ENCODE measurements at regions of chr1 and their contacts with region 1.

Region 1: DNA sequence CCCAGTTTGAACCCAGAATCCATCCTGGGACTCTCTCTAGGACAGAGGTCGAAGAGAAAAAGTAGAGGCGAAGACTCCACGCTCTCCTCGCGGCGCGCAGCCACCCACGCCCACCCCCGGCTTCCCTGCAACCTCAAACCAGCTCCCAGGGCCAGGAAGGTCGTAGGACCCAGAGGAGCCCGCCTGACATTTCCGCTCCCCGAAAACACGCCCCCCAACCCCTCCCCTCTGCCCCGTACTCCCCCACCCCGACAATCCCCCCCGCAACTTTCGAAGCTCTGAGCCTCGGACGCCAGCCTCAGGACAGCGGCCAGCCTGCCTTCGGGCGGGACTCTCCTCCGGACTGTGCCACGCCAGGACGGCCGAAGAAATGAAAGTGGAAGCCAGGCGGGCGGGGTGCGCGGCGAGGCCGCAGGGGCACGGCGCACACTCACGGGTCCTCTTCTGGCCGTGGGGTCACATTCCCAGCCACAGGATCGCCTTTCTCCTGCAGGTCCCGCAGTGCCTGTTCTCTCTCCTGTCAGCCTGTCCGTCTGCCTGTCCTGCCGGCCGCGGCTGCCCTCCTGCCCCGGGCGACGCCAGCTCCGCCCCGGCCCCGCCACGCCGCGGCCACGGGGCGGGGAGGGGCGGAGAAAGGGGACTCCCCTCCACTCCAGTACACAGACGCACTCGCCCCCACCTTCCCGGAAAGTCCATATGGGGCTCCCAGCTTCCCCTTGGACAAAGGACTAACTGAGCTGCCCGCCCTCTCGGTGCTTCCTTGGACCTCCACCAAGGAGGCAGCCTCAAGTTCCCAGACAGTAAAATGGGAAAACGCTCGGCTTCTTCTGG is at the start of gene MOB3C:
- DNase-seq: peak; percentile 55
- H3K4me3 ChIP-seq: peak within 1 kb of the TSS; percentile 89
- H3K27ac ChIP-seq: peak within 1 kb of the TSS; percentile 81
- H3K27me3 ChIP-seq: no peaks in the 10 kb centered on the region
- CTCF ChIP-seq: no peak
- polyA plus RNA-seq, gene MOB3C: 11.9 and 13.0 TPM in 2 replicates

Region 2: GRCh38 chr1:46603858-46604549 is 12.5 kb before region 1 on chr1 and contains the start of gene MKNK1:
- CTCF ChIA-PET with region 1: interaction called, 5 read pairs
- POLR2A ChIA-PET with region 1: interaction called, 21 read pairs
- DNase-seq: peak; percentile 87
- H3K4me3 ChIP-seq: peak within 1 kb of the TSS; percentile 98
- H3K27ac ChIP-seq: no peak within 1 kb of the TSS
- H3K27me3 ChIP-seq: no peaks in the 10 kb centered on the region
- CTCF ChIP-seq: peak; percentile 27; the same call in 1 of the 2 replicates
- polyA plus RNA-seq, gene MKNK1: 38.0 and 41.5 TPM in 2 replicates

Region 3: GRCh38 chr1:46705408-46705807 is 88.9 kb after region 1 on chr1:
- CTCF ChIA-PET with region 1: no interaction called
- POLR2A ChIA-PET with region 1: no interaction called
- DNase-seq: no peak
- H3K4me3 ChIP-seq: no peak overlapping the region
- H3K27ac ChIP-seq: no peak overlapping the region
- H3K27me3 ChIP-seq: no peaks in the 10 kb centered on the region
- CTCF ChIP-seq: no peak

Measured in AG04450 (cell line).